ENCODE measurements at regions of chr1 and their contacts with region 1.

Region 1: GRCh38 chr1:172429331-172430127 is 9.0 kb downstream of the C1orf105 start:
- DNase-seq: no peak
- ATAC-seq: peak; percentile 61 to 67

Region 2: DNA sequence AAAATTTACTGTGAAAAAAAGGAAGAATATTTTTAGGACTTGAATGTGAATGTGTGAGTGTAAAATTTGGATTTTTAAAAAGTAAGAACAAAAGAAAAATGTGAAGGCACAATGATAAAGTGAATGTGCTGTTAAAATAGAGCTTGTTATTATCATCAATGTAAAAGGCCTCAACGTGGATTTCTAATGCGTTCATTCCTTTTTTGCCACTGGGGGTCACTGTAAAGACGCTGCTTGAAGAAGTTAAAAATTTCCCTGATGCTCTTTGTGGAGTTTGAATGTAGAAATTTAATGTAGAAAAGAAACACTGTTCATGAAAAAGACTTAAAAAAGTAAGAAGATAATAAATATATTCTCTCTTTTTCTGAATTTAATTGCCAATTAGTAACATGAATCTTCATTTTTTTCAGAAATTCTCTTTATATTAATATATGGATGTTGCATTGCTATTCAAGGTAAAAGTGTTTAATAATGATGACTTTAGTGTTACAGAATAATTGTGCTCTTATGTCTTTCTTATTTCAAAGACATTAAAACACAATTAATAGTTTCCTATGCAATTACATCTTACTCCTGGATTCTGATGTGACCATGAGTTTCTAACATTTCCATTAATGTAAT is 426.7 kb before region 1 on chr1:
- intact Hi-C with region 1: loop called in 1 of 2 experiments (anchors 10 kb)
- DNase-seq: no peak
- ATAC-seq: no peak